PC-3 (cell line): ENCODE measurements at regions of chr12 and their contacts with region 1.

Region 1: GRCh38 chr12:90274407-90274806 is 565.8 kb upstream of the ATP2B1 start:
- DNase-seq: peak; percentile 9
- ATAC-seq: peak; percentile 76
- H3K4me3 ChIP-seq: no peak overlapping the region
- H3K27ac ChIP-seq: no peak overlapping the region
- H3K4me1 ChIP-seq: no peaks in the 10 kb centered on the region
- H3K27me3 ChIP-seq: no peaks in the 10 kb centered on the region
- CTCF ChIP-seq: peak; percentile 34; the same call in 1 of the 2 replicates

Region 2: GRCh38 chr12:90163975-90164374 is 110.4 kb before region 1 on chr12:
- CTCF ChIA-PET with region 1: no interaction called
- POLR2A ChIA-PET with region 1: no interaction called
- intact Hi-C with region 1: no loop called
- DNase-seq: peak; percentile 16
- ATAC-seq: no peak
- H3K4me3 ChIP-seq: no peak overlapping the region
- H3K27ac ChIP-seq: no peak overlapping the region
- H3K4me1 ChIP-seq: no peaks in the 10 kb centered on the region
- H3K27me3 ChIP-seq: no peaks in the 10 kb centered on the region
- CTCF ChIP-seq: peak; percentile 41

Region 3: GRCh38 chr12:90181216-90181615 is 93.2 kb before region 1 on chr12:
- CTCF ChIA-PET with region 1: no interaction called
- POLR2A ChIA-PET with region 1: no interaction called
- intact Hi-C with region 1: no loop called
- DNase-seq: no peak
- ATAC-seq: no peak
- H3K4me3 ChIP-seq: no peak overlapping the region
- H3K27ac ChIP-seq: no peak overlapping the region
- H3K4me1 ChIP-seq: no peaks in the 10 kb centered on the region
- H3K27me3 ChIP-seq: no peaks in the 10 kb centered on the region
- CTCF ChIP-seq: 0 out of 2 replicates have a peak, but pooled peaks have one; percentile 16

Region 4: DNA sequence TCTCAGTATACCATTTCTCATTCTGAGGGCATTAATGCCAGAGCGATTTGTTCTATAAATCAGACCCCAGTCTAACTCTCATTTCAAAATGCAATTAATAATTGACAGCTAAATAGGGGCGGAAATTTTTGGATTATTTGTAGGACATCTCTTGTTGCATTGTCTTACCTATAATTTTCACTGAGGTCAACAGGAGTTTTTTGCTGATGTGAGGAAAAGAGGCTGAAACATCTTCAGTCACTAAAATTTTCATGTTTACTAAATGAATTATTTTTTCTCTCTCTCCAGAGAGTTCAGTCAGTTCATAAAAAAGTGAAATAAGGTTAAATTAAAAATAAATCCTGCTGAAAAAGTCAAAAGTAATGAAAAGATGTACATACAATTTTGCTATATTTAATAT is 384.7 kb after region 1 on chr12:
- CTCF ChIA-PET with region 1: no interaction called
- POLR2A ChIA-PET with region 1: no interaction called
- intact Hi-C with region 1: no loop called
- DNase-seq: no peak
- ATAC-seq: no peak
- H3K4me3 ChIP-seq: no peak overlapping the region
- H3K27ac ChIP-seq: no peak overlapping the region
- H3K4me1 ChIP-seq: no peaks in the 10 kb centered on the region
- H3K27me3 ChIP-seq: no peaks in the 10 kb centered on the region
- CTCF ChIP-seq: no peak

Region 5: GRCh38 chr12:90690120-90690519 is 415.7 kb after region 1 on chr12:
- CTCF ChIA-PET with region 1: no interaction called
- POLR2A ChIA-PET with region 1: no interaction called
- intact Hi-C with region 1: loop called (anchors 1 kb)
- DNase-seq: no peak
- ATAC-seq: peak; percentile 35; the same call in 1 of the 2 replicates
- H3K4me3 ChIP-seq: no peak overlapping the region
- H3K27ac ChIP-seq: no peak overlapping the region
- H3K4me1 ChIP-seq: no peaks in the 10 kb centered on the region
- H3K27me3 ChIP-seq: no peaks in the 10 kb centered on the region
- CTCF ChIP-seq: no peak; the same call in 1 of the 2 replicates